Activated naive CD4-positive, alpha-beta T cell treated with anti-CD3 and anti-CD28 coated beads for 36 hours (primary cell): ENCODE measurements at regions of chrX and their contacts with region 1.

Region 1: GRCh38 chrX:86133761-86134160 is 14.5 kb upstream of the DACH2 start:
- DNase-seq: no peak
- H3K4me3 Mint-ChIP-seq: no peak overlapping the region
- H3K27ac Mint-ChIP-seq: no peak overlapping the region
- H3K4me1 Mint-ChIP-seq: peaks cover 2% of the 10 kb centered on the region
- H3K27me3 Mint-ChIP-seq: peaks cover 2% of the 10 kb centered on the region

Region 2: DNA sequence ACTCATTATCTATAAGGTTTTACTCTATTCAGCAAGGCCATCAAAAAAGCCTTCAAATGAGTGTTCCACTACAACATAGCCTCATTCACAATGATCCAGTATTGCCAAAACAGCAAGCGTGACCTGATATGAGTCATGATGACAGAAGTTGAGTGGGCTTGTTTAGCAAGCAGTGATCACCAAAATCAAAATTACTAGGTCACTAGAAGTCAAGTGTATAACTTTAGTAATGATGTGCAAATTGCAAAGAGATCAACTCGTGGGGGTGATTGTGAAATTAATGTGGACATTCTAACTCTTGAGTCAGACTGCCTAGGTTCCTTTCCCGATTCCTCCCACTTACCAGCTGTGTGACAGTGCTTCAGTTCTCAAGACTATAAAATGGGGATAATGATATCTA is 210.9 kb before region 1 on chrX:
- CTCF ChIA-PET with region 1: no interaction called
- intact Hi-C with region 1: no loop called
- DNase-seq: no peak
- H3K4me3 Mint-ChIP-seq: no peak overlapping the region
- H3K27ac Mint-ChIP-seq: no peak overlapping the region
- H3K4me1 Mint-ChIP-seq: peaks cover 12% of the 10 kb centered on the region
- H3K27me3 Mint-ChIP-seq: no peaks in the 10 kb centered on the region

Region 3: GRCh38 chrX:87664381-87664780 is 1530.6 kb after region 1 on chrX:
- CTCF ChIA-PET with region 1: no interaction called
- intact Hi-C with region 1: loop called (anchors 10 kb)
- DNase-seq: no peak
- H3K4me3 Mint-ChIP-seq: no peak overlapping the region
- H3K27ac Mint-ChIP-seq: no peak overlapping the region
- H3K4me1 Mint-ChIP-seq: no peaks in the 10 kb centered on the region
- H3K27me3 Mint-ChIP-seq: no peaks in the 10 kb centered on the region